Adrenal gland (tissue), 19 donors: ENCODE measurements at regions of chr5 and their contacts with region 1.

Region 1: DNA sequence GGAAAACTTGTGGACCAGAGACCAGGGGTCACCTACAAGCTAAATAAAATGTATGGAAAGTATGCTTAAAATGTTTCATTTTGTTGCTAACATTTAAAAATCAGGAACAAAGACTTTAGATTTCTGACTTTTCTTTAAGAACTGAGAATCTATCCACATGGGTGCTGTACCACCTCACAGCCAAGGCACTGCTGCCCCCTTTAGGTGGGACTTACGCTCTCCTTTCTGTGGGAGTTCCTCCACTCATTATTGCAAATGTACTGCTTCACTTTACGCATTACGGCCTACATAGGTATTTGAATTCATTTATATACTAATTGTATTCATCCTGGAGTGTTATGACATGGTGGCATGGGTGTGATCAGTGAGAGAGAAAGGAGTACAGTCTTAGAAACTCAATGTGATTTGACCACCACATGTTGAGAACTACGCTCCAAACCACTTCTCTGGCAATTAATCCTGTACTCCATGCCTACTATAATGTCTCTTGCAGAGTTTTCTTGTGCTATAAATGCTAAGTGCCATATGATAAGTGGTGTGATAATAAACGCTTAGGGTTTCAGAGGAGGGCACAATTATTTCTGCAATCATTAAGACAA is 24.7 kb upstream of the CETN3 start:
- DNase-seq: peak in 5 of 7 donors; percentile 26 to 62 (median 34)
- H3K4me3 ChIP-seq: no peak overlapping the region
- H3K27ac ChIP-seq: no peak overlapping the region
- H3K4me1 ChIP-seq: peaks cover 0 to 1% of the 10 kb centered on the region in 2 donors
- H3K27me3 ChIP-seq: no peaks in the 10 kb centered on the region
- CTCF ChIP-seq: peak in 5 of 6 experiments; percentile 20 to 49 (median 28)
- POLR2A ChIP-seq: no peak

Region 2: DNA sequence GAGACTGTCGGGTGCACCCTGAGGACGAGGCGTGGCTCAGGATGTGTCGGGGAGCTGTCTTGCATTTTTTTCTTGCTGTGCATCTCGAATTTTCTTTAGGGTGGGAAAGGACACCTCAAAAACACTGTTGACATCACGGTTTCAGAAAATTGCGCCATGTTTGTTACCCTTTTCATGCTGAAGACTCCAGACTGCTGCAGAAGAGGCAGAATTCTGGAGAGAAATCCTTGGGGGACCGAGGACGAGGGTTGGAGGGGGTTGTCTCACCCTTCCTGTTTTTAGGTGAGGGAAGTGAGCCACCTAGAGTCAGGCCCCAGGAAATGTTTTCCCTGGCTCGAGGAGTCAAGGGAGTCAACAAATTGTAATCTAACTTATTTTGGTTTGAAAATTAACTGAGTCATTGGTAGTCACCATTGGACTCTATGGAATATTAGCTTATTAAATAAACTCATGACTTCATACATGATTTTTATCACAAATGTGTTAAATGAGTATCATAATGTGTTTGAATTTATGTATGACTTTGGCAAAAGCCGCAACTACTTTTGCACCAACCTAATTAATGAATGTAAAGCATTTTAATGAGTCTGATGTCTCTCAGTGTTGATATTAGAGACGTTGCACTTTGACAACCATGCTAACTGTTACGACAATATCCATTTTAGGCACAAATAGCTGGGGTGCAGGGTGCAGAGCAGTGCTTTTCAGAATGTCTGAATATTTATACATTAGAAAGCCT is 95.9 kb after region 1 on chr5:
- intact Hi-C with region 1: loop called in 1 of 2 experiments (anchors 10 kb)
- DNase-seq: peak; percentile 70 to 87 (median 75)
- H3K4me3 ChIP-seq: peak overlapping the region; percentile 19 to 98 (median 72)
- H3K27ac ChIP-seq: peak overlapping the region in 4 of 5 donors; percentile 54 to 94 (median 80)
- H3K4me1 ChIP-seq: peaks cover 5 to 39% of the 10 kb centered on the region in 2 donors
- H3K27me3 ChIP-seq: no peaks in the 10 kb centered on the region
- CTCF ChIP-seq: peak; percentile 43 to 85 (median 70)
- POLR2A ChIP-seq: no peak

Region 3: GRCh38 chr5:90606539-90606938 is 172.3 kb after region 1 on chr5:
- intact Hi-C with region 1: loop called in 1 of 2 experiments (anchors 10 kb)
- DNase-seq: no peak
- H3K4me3 ChIP-seq: no peak overlapping the region
- H3K27ac ChIP-seq: no peak overlapping the region
- H3K4me1 ChIP-seq: no peaks in the 10 kb centered on the region
- H3K27me3 ChIP-seq: no peaks in the 10 kb centered on the region
- CTCF ChIP-seq: no peak
- POLR2A ChIP-seq: no peak

Region 4: DNA sequence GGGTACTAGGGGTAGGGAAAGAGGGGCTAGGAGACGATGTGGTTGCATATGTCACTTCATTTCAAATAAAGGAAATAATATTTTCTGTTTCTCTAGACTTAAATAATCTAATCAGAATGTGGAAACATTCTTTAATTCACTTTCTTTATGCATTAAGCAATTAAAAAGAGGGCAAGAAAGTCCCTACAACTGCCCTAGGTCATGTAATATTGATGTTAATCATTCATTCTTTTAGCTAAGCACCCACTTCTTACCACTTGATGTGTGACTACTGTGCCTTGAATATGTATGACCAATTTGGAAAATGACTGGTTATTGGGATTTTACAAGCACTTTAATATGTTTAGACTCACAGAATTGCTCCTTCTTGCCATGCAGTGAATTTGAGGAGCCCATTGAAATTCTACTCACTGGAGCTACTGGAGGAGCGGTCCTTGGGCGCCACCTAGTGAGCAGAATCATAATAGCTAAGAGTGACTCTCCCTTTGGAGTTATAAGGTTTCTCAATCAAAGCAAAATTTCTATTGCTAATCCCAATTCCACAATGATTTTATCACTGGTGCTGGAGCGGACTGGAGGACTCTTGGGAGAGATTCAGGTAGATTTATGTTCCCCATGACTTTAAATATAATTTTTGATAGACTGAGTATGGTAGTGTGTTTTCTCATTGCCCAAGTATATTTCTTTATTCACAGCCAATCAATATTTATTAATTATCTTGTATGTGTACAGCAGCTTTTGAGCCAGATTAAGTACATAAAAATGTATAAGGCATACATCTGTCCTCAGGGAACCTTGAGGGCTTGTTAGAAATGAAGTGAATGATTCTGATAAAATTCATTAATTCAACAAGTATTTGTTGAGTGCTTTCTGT is 349.5 kb after region 1 on chr5:
- intact Hi-C with region 1: loop called in 1 of 2 experiments (anchors 10 kb)
- DNase-seq: peak; percentile 67 to 86 (median 76)
- H3K4me3 ChIP-seq: no peak overlapping the region
- H3K27ac ChIP-seq: no peak overlapping the region
- H3K4me1 ChIP-seq: no peaks in the 10 kb centered on the region
- H3K27me3 ChIP-seq: peaks cover 4% of the 10 kb centered on the region
- CTCF ChIP-seq: peak; percentile 64 to 92 (median 72)
- POLR2A ChIP-seq: no peak